ENCODE measurements at regions of chr3 and their contacts with region 1.

Region 1: DNA sequence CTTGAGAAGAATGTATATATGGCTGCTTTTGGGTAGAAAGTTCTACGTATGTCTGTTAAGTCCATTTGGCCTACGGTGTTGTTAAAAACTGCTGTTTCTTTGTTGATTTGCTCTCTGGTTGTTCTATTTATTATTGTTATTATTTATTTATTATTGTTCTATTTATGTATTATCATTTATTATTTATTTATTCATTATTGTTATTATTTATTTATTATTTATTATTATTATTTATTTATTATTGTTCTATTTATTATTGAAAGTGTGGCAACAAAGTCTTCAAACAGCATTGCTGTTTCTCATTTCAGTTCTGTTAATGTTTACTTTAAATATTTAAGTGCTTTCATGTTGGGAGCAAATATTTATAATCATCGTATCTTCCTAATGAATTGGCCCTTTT is 66.7 kb downstream of the SI start:
- DNase-seq: no peak
- ATAC-seq: no peak
- H3K4me3 Mint-ChIP-seq: no peak overlapping the region
- H3K27ac Mint-ChIP-seq: no peak overlapping the region
- H3K4me1 Mint-ChIP-seq: no peaks in the 10 kb centered on the region
- H3K27me3 Mint-ChIP-seq: no peaks in the 10 kb centered on the region

Region 2: GRCh38 chr3:165056510-165056909 is 45.0 kb after region 1 on chr3:
- CTCF ChIA-PET with region 1: no interaction called
- POLR2A ChIA-PET with region 1: no interaction called
- intact Hi-C with region 1: loop called in 1 of 2 experiments (anchors 5 kb)
- DNase-seq: no peak
- ATAC-seq: no peak
- H3K4me3 Mint-ChIP-seq: no peak overlapping the region
- H3K27ac Mint-ChIP-seq: no peak overlapping the region
- H3K4me1 Mint-ChIP-seq: no peaks in the 10 kb centered on the region
- H3K27me3 Mint-ChIP-seq: no peaks in the 10 kb centered on the region